Mammary epithelial cell (primary cell): ENCODE measurements at regions of chr11 and their contacts with region 1.

Region 1: DNA sequence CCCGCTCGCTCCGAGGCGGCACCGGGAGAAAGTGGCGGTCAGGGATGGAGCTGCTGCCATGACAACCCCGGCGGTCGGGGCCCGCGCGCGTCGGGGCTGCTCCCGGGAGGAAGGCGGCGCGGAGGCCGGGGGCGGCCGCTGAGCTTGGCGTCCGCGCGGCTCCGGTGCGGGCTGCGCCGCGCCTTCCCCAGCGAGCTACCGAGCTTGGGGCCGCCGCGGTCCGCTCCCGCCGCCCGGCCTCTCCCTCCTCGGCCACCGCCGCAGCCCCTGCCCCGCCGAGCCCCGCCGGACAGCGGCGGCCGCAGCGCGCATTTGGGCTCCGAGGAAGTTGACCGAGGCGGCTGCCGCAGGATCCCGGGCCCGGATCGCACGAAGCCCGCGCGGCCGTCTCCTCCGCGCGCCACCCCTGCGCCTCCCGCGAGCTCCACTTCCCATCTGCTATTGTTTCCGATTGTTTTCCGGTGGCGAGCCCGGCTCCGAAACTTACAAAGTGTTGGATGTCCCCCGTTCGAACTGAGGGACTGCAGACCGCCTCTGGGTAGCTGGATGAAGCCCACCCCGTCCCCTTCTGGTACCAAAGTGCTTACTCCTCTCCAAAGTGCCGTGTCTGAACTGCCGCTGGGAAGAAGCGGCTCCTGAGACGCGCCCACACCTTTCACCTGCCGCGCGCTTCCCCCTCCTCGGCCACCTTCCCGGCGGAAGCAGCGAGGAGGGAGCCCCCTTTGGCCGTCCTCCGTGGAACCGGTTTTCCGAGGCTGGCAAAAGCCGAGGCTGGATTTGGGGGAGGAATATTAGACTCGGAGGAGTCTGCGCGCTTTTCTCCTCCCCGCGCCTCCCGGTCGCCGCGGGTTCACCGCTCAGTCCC is 540.3 kb downstream of the NTM start:
- DNase-seq: peak; percentile 60
- H3K4me3 ChIP-seq: peak overlapping the region; percentile 70 to 83 (median 81)
- H3K27ac ChIP-seq: peak overlapping the region; percentile 69
- H3K4me1 ChIP-seq: peaks cover 36% of the 10 kb centered on the region
- H3K27me3 ChIP-seq: no peaks in the 10 kb centered on the region
- CTCF ChIP-seq: no peak

Region 2: GRCh38 chr11:131748151-131749050 is 162.4 kb before region 1 on chr11:
- CTCF ChIA-PET with region 1: no interaction called
- dilution Hi-C with region 1: no loop called
- in situ Hi-C with region 1: no loop called
- intact Hi-C with region 1: loop called (anchors 1 kb)
- DNase-seq: peak; percentile 42
- H3K4me3 ChIP-seq: no peak overlapping the region
- H3K27ac ChIP-seq: no peak overlapping the region
- H3K4me1 ChIP-seq: peaks cover 6% of the 10 kb centered on the region
- H3K27me3 ChIP-seq: no peaks in the 10 kb centered on the region
- CTCF ChIP-seq: peak; percentile 85 to 92

Region 3: DNA sequence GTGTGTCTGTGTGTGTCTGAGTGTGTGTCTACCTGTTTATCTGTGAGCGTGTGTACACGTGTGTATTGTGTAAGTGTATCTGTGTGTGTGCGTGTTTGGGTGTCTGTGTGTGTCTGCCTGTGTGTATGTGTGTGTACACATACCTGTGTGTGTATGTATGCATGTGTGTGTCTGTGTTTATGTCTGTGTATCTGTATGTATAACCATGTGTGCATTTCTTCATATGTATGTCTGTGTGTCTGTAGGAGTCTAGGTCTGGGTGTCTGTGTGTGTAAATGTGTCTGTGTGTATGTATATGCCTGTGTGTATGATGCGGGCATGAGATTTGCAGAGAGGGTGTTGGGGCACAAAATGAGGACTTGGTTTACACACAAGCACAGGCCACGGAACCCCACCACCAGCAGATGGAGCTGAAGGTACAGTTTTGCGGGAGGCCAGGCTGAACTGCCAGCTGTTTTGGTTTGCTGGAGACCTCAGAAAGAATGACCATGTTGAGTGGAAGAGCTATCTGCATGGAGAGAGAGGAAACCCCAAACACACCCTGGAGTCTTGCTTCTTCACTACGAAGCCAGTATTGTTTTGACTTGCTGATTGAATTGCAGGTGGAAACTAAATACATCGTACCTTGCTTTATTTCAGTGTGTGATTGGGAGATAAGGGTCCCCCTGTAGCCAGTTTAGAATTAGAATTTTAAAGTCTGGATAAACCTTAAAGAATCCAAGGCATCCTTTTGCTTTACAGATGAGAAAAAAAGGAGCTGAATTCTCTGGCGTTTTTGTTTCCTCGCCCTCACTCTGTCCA is 43.1 kb before region 1 on chr11:
- CTCF ChIA-PET with region 1: interaction called, 14 read pairs
- dilution Hi-C with region 1: loop called (anchors 5 kb)
- in situ Hi-C with region 1: loop called in 1 of 2 experiments (anchors 10 kb)
- intact Hi-C with region 1: loop called (anchors 1 kb)
- DNase-seq: peak; percentile 70
- H3K4me3 ChIP-seq: no peak overlapping the region
- H3K27ac ChIP-seq: no peak overlapping the region
- H3K4me1 ChIP-seq: peaks cover 6% of the 10 kb centered on the region
- H3K27me3 ChIP-seq: no peaks in the 10 kb centered on the region
- CTCF ChIP-seq: peak; percentile 95 to 98

Region 4: DNA sequence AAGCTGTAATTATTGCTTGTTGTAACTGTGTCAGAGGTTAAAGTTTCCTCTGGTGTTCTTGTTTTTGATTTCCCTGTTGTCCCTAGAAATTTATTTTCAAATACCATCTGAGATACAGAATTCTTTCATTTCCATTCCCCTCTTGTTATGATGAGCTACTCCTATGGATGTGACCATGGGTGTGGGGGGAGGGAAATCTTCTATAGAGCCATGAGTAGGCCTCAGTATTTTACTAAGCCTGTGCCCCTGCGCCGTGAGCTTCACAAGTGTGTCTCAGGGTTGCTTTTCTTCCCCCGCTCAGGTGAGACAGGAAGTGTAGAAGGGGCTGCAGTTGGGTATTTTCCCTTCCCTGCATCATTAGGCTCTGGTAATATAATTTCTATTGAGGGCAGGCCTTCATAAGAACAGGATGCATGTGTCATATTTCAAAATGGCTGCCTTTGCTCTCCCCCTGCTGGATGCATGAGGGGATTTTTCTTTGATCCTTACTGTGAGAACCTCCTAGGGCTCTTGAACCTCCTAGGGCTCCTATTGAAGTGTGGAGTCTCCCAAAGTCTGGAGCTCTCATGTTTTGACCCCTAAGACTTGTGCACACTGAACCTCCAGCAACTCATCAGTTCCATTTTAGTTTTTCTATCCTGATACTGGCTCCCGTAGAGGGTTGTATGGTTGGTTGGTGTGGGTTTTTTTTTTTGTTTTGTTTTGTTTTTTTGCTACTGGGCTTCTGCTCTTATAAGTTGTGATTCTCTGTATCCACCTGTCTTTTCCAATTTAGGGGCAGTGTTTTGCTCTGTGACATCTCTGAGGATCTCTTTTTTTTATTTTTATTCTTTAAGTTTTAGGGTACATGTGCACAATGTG is 117.9 kb after region 1 on chr11:
- CTCF ChIA-PET with region 1: no interaction called
- dilution Hi-C with region 1: no loop called
- in situ Hi-C with region 1: no loop called
- intact Hi-C with region 1: loop called (anchors 1 kb)
- DNase-seq: no peak
- H3K4me3 ChIP-seq: no peak overlapping the region
- H3K27ac ChIP-seq: no peak overlapping the region
- H3K4me1 ChIP-seq: peaks cover 35% of the 10 kb centered on the region
- H3K27me3 ChIP-seq: no peaks in the 10 kb centered on the region
- CTCF ChIP-seq: peak; percentile 62 to 64

Region 5: GRCh38 chr11:132158093-132158492 is 247.3 kb after region 1 on chr11:
- CTCF ChIA-PET with region 1: no interaction called
- dilution Hi-C with region 1: no loop called
- in situ Hi-C with region 1: no loop called
- intact Hi-C with region 1: loop called (anchors 1 kb)
- DNase-seq: peak; percentile 30
- H3K4me3 ChIP-seq: no peak overlapping the region
- H3K27ac ChIP-seq: no peak overlapping the region
- H3K4me1 ChIP-seq: peaks cover 16% of the 10 kb centered on the region
- H3K27me3 ChIP-seq: no peaks in the 10 kb centered on the region
- CTCF ChIP-seq: peak; percentile 49 to 73